ENCODE measurements at regions of chr1 and their contacts with region 1.

Region 1: DNA sequence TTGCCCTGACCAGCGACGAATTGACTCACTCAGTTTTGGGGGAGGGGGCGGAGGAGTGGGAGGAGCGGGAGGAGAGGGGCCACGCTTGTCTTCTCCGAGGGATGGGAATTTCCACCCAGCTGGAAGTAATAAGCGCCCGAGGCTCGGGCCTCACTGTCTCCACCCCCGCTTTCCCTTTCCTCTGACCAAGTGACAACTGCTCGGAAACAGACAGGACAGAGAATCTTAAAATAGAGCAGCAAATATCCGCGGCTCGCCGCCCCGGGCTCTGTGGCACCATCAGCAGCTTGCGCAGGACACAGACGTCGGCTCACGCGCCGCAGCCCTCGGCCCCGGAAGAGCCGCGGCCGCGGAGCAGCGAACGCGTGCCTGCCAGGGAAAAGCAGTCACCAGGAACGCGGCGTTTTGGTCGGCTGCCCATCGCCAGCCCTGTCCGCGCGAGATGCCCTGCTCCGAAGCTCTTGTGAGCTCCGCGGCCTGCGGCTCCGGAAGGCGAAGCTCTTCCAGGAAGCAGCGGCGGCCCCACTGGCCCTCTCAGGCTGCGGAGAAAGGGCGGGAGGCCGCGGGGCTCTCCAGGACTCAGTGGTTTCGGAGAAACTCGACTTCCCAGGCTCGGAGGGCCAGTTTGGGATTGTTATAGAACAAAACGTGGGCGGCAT is 10.7 kb upstream of the RGS16 start:
- DNase-seq: peak; percentile 76
- H3K4me3 Mint-ChIP-seq: peak overlapping the region; percentile 77
- H3K27ac Mint-ChIP-seq: peak overlapping the region; percentile 89
- H3K4me1 Mint-ChIP-seq: peaks cover 55% of the 10 kb centered on the region
- H3K27me3 Mint-ChIP-seq: peaks cover 12% of the 10 kb centered on the region

Region 2: DNA sequence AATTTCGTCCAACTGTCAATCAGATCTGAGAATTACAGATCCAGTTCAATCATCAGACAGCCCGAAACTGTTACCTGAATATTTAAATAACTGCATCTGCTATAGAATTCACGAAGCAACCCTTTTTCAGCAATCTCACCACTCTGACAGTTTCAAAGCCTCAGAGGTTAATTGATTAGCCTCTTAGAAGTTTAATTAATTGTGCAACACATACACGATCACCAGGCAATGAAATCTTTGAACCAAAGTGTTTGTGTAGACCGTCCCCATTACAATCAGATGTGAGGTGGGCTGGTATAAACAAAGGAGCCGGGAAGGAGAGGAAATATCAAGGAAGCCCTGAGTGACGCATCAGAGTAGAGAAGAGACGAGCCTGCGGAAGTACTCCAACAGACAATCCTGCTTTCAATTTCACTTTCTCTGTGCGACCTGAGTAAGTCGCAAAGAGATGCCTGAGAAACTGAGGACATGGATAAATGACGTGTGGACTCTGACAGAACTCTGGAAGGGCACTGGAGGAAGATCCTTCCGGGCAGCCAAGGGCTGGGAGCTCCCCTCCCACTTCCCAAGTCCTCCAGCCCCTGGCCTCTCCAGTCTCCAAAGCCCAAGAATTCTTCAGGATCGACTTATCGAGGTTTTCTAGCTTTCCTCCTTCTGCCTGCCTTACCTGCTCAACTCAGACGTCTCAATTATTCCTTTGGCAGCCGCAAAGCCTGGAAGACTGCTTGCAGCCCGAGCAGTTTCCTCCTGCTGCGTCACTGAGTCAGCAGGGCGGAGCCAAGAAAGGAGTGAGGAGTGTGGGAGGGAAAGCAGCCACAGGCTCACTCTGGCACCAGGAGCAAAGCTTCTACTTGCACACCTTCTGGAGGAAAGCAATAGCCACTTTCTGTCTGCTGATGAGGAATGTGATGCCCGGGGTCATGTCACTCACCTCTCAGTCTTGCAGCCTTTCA is 26.1 kb before region 1 on chr1 and contains the start of gene RNASEL:
- CTCF ChIA-PET with region 1: no interaction called
- POLR2A ChIA-PET with region 1: no interaction called
- intact Hi-C with region 1: loop called (anchors 1 kb)
- DNase-seq: peak; percentile 74
- H3K4me3 Mint-ChIP-seq: peak within 1 kb of the TSS; percentile 94
- H3K27ac Mint-ChIP-seq: peak within 1 kb of the TSS; percentile 99
- H3K4me1 Mint-ChIP-seq: peaks cover 46% of the 10 kb centered on the region
- H3K27me3 Mint-ChIP-seq: no peaks in the 10 kb centered on the region
- total RNA-seq, gene RNASEL: 4.5 TPM

Region 3: DNA sequence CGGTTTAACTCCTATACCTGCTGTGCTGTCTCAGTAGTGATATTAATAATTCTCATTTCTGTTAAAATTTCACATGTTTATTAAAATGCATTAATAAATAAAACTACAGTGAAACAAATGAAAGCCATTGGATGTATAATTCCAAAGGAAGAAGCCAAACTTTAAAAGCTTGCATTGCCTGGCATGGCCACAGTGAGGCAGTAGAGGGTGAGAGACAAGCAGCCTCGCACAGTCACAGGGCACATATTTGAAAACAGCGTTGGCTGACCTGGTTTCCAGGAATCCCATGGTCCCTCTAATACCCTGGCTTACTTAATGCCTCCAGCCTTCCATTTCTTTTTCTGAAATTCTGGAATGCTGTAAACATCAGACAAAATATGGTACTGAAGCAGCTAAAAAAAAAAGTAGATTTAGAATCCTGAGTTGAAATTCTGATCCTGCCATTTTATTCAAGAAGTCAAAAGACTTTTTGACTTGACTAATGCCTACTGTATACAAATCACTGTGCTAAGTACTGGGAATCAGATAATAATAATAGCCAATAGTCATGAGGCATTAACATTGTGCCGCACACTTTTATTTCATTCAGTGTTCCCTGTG is 19.2 kb before region 1 on chr1:
- CTCF ChIA-PET with region 1: interaction called, 29 read pairs
- POLR2A ChIA-PET with region 1: interaction called, 15 read pairs
- intact Hi-C with region 1: no loop called
- DNase-seq: peak; percentile 80
- H3K4me3 Mint-ChIP-seq: no peak overlapping the region
- H3K27ac Mint-ChIP-seq: no peak overlapping the region
- H3K4me1 Mint-ChIP-seq: peaks cover 10% of the 10 kb centered on the region
- H3K27me3 Mint-ChIP-seq: no peaks in the 10 kb centered on the region

Region 4: DNA sequence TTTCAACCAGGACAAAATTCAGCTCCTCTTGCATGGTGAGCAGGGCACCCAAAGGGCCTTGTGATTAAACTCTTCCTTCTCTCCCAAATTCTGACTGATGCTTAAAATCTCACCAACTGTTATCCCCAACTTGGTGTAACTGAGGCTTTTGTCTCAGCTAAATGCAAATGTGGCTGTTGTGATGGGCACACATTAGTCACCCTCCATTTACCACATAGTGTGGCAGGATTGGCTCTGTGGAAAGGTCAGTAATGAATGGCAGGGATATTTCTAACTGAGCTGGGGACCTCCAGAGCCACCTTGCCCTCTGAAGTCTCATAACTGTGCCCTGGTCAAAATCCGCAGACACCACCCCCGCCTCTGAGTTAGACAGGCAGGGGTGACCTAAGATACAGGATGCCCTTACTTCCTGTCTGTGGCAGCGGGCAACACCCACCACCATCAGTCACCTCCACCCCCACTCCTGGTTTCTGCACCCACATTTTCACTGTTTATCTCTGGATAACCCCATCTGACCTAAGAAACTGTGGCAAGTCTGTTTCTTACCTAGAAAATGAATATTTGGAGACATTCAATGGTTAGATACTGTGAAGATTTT is 14.7 kb after region 1 on chr1:
- CTCF ChIA-PET with region 1: interaction called, 12 read pairs
- POLR2A ChIA-PET with region 1: interaction called, 28 read pairs
- intact Hi-C with region 1: loop called (anchors 1 kb)
- DNase-seq: peak; percentile 87
- H3K4me3 Mint-ChIP-seq: no peak overlapping the region
- H3K27ac Mint-ChIP-seq: peak overlapping the region; percentile 50
- H3K4me1 Mint-ChIP-seq: peaks cover 64% of the 10 kb centered on the region
- H3K27me3 Mint-ChIP-seq: peaks cover 9% of the 10 kb centered on the region

Region 5: DNA sequence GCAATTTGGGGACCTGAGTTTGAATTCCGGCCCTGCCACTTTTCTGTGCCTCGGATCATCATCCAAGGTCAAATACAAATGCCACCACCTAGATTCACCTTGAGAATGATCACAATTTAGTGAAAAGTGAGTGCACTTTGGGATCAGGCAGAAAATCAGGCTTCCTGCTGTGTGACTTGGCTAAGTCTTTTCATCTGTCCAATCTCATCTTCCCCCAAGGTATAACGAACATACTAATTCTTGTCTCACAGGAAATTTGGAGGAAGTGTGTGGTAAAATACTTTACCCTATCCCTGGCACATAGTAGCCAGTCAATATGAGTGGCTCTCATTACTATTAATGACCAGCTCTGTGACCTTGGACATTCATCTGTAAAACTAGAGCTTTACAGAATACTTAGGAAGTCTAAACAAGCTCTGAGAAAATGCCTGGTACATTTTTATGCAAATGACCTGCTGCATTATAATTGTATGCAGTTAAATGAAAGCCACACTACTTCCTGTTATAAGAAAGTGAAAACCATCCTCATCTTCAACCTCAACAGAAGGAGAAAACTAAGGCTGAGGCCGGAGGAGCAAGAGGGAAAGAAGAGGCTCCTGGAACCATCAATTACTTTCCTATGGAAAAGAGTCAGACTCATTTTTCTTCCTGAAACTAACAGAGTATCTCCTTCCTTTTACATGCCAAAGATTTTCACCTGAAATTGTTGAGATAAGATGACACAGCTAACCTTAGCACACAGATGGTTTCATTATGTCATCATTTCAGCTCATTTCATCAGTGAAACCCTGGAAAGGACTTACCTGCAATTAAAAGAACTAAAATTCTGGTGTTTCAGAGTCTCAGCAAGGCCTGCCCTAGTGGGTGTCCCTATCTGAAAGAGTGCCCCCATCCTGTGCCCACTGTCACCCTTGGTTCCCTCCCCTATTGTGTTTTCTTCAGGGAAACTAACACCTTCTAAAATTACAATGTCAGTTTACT is 102.1 kb after region 1 on chr1:
- CTCF ChIA-PET with region 1: no interaction called
- POLR2A ChIA-PET with region 1: no interaction called
- intact Hi-C with region 1: loop called (anchors 2 kb)
- DNase-seq: no peak
- H3K4me3 Mint-ChIP-seq: no peak overlapping the region
- H3K27ac Mint-ChIP-seq: peak overlapping the region; percentile 19
- H3K4me1 Mint-ChIP-seq: peaks cover 39% of the 10 kb centered on the region
- H3K27me3 Mint-ChIP-seq: no peaks in the 10 kb centered on the region

Region 6: GRCh38 chr1:182789138-182790076 is 174.5 kb after region 1 on chr1 and contains the start of gene NPL:
- CTCF ChIA-PET with region 1: interaction called, 45 read pairs
- POLR2A ChIA-PET with region 1: no interaction called
- intact Hi-C with region 1: no loop called
- DNase-seq: peak; percentile 90
- H3K4me3 Mint-ChIP-seq: peak within 1 kb of the TSS; percentile 80
- H3K27ac Mint-ChIP-seq: no peak within 1 kb of the TSS
- H3K4me1 Mint-ChIP-seq: peaks cover 13% of the 10 kb centered on the region
- H3K27me3 Mint-ChIP-seq: no peaks in the 10 kb centered on the region
- total RNA-seq, gene NPL: 3.8 to 7.8 TPM